Ascending aorta (tissue), 2 donors: ENCODE measurements at regions of chr16 and their contacts with region 1.

Region 1: GRCh38 chr16:77722309-77723107 is at the start of gene NUDT7:
- DNase-seq: peak; percentile 89 to 99
- H3K4me3 ChIP-seq: peak within 1 kb of the TSS; percentile 64 to 67
- H3K27ac ChIP-seq: peak within 1 kb of the TSS; percentile 75 to 83
- H3K4me1 ChIP-seq: no peaks in the 10 kb centered on the region
- H3K27me3 ChIP-seq: no peaks in the 10 kb centered on the region
- CTCF ChIP-seq: peak; percentile 11 to 38 (median 26)
- total RNA-seq, gene NUDT7: not detected

Region 2: DNA sequence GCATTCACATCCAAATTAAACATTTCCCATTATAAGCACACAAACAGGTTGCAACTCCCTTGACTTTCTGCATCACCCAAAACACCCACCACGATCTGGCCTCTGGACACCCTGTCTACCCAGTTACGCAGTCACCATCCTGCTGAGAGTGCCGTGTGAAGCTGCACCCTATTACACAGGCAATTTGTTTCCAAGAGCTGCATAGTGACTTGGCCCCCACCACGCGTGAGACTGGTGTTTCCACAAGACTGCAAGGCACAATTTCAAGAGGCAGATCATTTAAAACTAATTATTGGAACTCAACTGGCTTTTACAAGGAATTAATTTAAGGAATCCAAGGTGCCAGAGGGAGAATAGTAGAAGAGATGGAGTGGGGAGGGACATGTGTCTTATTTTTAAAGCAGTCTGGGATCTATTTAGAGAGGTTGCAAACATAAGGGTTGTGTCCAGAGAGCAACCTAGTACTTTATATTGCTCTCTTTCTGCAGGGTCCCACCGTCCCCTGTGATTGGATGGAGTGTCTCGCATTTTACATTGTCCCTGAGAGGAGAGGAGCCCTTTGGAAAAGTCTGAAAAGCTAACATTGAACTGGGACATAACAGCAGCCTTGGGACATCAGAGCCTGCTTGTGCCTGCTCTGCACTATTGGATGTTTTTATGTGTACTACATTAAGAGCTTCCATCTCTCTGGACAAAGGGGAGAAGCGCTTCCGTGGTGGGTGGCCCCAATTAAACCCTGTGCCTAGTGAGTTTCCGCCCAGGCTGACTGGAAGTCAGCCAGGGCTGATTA is 279.0 kb before region 1 on chr16:
- intact Hi-C with region 1: no loop called
- DNase-seq: no peak
- H3K4me3 ChIP-seq: no peak overlapping the region
- H3K27ac ChIP-seq: no peak overlapping the region
- H3K4me1 ChIP-seq: no peaks in the 10 kb centered on the region
- H3K27me3 ChIP-seq: no peaks in the 10 kb centered on the region
- CTCF ChIP-seq: no peak

Region 3: GRCh38 chr16:77675464-77676324 is 46.8 kb before region 1 on chr16:
- intact Hi-C with region 1: loop called (anchors 2 kb)
- DNase-seq: peak in 1 of 2 donors; percentile 88
- H3K4me3 ChIP-seq: no peak overlapping the region
- H3K27ac ChIP-seq: no peak overlapping the region
- H3K4me1 ChIP-seq: no peaks in the 10 kb centered on the region
- H3K27me3 ChIP-seq: no peaks in the 10 kb centered on the region
- CTCF ChIP-seq: peak; percentile 90 to 95 (median 91)

Region 4: DNA sequence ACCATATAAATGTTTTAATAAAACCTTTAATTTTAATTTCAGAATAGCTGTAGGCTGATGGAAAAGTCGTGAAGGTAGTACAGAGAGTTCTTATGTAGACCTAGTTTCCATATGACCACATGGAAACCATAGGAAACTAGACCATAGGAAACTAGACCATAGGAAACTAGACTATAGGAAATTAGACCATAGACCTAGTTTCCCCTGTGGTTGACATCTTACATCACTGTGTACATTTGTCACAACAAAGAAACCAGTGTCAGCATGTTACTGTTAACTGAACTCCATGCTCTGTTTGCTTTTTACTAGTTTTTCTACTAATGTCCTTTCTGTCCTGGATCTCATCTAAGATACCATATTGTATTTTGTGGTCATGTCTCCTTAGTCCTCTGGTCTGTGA is 14.4 kb after region 1 on chr16:
- intact Hi-C with region 1: no loop called
- DNase-seq: no peak
- H3K4me3 ChIP-seq: no peak overlapping the region
- H3K27ac ChIP-seq: no peak overlapping the region
- H3K4me1 ChIP-seq: no peaks in the 10 kb centered on the region
- H3K27me3 ChIP-seq: no peaks in the 10 kb centered on the region
- CTCF ChIP-seq: no peak

Region 5: DNA sequence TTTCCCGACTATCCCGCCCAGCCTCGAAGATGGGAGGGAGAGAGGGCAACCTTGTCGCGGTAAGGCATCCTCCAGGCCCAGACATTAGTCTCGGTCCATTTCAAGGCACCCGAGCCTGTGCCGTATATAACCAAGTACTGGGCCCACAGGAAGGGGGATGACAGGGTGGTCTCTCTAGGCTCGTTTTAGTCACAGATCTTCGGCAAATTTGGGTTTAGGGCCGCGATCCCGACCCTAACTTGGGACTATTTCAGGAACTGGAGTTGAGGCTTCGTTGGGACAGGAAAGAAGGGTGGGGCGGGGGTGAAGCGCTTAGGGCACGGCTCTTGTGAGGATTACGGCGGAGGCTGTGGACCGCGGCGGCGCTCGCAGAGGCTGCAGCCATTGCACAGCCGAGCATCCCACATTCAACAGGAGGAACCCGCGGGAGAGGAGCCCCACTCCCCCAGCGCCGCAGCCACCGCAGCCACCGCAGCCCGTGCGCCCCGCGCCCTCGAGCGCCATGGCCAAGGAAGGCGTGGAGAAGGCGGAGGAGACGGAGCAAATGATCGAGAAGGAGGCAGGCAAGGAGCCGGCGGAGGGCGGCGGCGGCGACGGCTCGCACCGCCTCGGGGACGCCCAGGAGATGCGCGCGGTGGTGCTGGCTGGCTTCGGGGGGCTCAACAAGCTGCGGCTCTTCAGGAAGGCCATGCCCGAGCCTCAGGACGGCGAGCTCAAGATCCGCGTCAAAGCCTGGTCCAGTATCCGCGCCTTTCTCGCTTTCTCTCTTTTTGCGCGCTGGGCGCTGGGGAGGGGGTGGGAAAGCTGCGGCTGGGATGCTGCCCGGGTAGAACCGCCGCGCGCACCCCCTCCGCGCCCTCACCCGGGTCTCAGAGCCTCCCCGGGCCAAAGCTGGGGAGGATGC is 65.9 kb after region 1 on chr16 and contains the start of gene VAT1L:
- intact Hi-C with region 1: loop called (anchors 2 kb)
- DNase-seq: peak in 1 of 2 donors; percentile 72
- H3K4me3 ChIP-seq: peak within 1 kb of the TSS; percentile 73 to 80
- H3K27ac ChIP-seq: peak within 1 kb of the TSS; percentile 50 to 60
- H3K4me1 ChIP-seq: peaks cover 0 to 8% of the 10 kb centered on the region in 2 donors
- H3K27me3 ChIP-seq: no peaks in the 10 kb centered on the region
- CTCF ChIP-seq: no peak
- total RNA-seq, gene VAT1L: 12.6 TPM

Region 6: GRCh38 chr16:77971306-77972271 is 249.1 kb after region 1 on chr16:
- intact Hi-C with region 1: loop called (anchors 2 kb)
- DNase-seq: peak in 1 of 2 donors; percentile 91
- H3K4me3 ChIP-seq: no peak overlapping the region
- H3K27ac ChIP-seq: peak overlapping the region; percentile 50 to 59
- H3K4me1 ChIP-seq: peaks cover 0 to 5% of the 10 kb centered on the region in 2 donors
- H3K27me3 ChIP-seq: no peaks in the 10 kb centered on the region
- CTCF ChIP-seq: peak; percentile 68 to 89 (median 84)

Region 7: GRCh38 chr16:78099372-78100161 is 377.1 kb after region 1 on chr16 and contains the start of gene WWOX:
- intact Hi-C with region 1: loop called (anchors 1 kb)
- DNase-seq: peak; percentile 91 to 99
- H3K4me3 ChIP-seq: peak within 1 kb of the TSS; percentile 67 to 98
- H3K27ac ChIP-seq: peak within 1 kb of the TSS; percentile 88 to 92
- H3K4me1 ChIP-seq: peaks cover 4 to 15% of the 10 kb centered on the region in 2 donors
- H3K27me3 ChIP-seq: no peaks in the 10 kb centered on the region
- CTCF ChIP-seq: peak; percentile 76 to 94 (median 81)
- total RNA-seq, gene WWOX: 106 TPM